Activated naive CD4-positive, alpha-beta T cell treated with anti-CD3 and anti-CD28 coated beads for 36 hours (primary cell): ENCODE measurements at regions of chr1 and their contacts with region 1.

Region 1: GRCh38 chr1:11979851-11980675 is at the start of gene MFN2:
- DNase-seq: peak; percentile 94
- H3K4me3 Mint-ChIP-seq: peak within 1 kb of the TSS; percentile 97
- H3K27ac Mint-ChIP-seq: peak within 1 kb of the TSS; percentile 92
- H3K4me1 Mint-ChIP-seq: peaks cover 47% of the 10 kb centered on the region
- H3K27me3 Mint-ChIP-seq: no peaks in the 10 kb centered on the region
- total RNA-seq, gene MFN2: 47.4 to 52.3 TPM

Region 2: GRCh38 chr1:11925938-11926292 is 54.1 kb before region 1 on chr1:
- CTCF ChIA-PET with region 1: interaction called, 3 read pairs
- intact Hi-C with region 1: loop called (anchors 1 kb)
- DNase-seq: peak; percentile 19
- H3K4me3 Mint-ChIP-seq: no peak overlapping the region
- H3K27ac Mint-ChIP-seq: no peak overlapping the region
- H3K4me1 Mint-ChIP-seq: peaks cover 33% of the 10 kb centered on the region
- H3K27me3 Mint-ChIP-seq: no peaks in the 10 kb centered on the region

Region 3: DNA sequence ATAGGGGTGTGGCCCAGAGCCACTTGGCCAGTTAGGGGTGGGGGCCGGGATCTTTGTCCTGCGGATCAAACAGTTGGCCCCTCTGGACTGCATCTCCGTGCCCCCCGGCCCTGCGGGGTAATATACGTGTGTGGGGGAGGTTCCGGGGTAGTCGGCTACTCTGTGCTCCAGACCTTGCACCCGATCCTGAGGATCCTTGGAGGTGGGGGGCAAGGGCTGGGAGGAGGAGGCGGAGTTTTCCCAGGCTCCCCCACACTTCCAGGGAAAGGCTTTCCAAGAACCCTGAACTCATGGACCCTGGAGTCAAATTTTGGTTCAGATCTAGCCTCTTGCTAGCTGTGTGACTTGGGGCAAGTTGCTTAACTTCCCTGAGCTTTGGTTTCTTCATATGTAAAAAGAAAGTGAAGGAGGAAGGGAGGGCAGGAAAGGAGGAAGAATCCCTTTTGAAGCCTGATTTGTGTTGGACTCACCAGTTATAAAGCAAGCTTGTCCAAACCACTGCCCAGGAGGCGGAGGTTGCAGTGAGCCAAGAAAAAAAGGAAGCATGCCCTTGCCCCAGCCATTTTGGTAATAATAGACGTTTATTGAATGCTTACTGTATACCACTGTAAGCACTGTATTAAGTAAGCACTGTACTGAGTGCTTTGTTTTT is 39.9 kb after region 1 on chr1:
- CTCF ChIA-PET with region 1: no interaction called
- intact Hi-C with region 1: loop called (anchors 1 kb)
- DNase-seq: no peak
- H3K4me3 Mint-ChIP-seq: peak overlapping the region; percentile 82
- H3K27ac Mint-ChIP-seq: peak overlapping the region; percentile 56
- H3K4me1 Mint-ChIP-seq: peaks cover 8% of the 10 kb centered on the region
- H3K27me3 Mint-ChIP-seq: no peaks in the 10 kb centered on the region

Region 4: DNA sequence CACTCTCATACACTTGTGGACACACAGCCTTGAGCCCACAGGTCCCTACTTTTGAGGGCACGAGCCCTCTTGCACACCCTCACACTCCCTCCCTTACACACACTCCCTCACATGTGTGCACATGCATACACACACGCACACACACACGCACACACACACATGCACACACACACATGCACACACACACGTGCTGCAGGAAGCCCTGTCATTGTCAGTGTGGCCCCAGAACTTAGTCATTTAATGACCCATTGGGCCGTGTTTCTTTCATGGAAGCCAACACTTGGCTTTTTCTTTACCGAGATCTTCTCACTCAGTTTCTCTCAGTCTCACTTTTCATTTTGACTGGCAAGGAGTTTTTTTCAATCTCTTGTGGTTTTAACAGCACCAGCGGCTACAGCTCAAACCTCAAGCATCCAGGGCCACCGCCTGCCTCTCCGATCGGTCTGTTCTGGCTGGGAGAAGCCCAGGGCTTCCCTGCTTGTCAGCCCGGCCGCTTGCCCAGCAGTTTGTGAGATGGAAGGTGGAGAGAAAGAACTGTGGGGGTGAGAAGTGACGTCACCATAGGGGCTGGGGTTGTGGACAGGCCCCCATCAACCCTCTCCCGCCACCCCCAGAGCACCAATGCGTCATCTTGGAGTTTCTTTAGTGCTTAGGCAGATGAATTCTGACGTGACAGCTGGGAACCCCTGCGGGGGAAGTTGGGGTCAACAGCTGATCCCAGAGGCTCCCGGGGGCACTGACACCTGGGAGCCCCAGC is 67.2 kb after region 1 on chr1:
- CTCF ChIA-PET with region 1: no interaction called
- intact Hi-C with region 1: no loop called
- DNase-seq: peak; percentile 87
- H3K4me3 Mint-ChIP-seq: no peak overlapping the region
- H3K27ac Mint-ChIP-seq: no peak overlapping the region
- H3K4me1 Mint-ChIP-seq: peaks cover 8% of the 10 kb centered on the region
- H3K27me3 Mint-ChIP-seq: peaks cover 8% of the 10 kb centered on the region